ENCODE measurements at regions of chr5 and their contacts with region 1.

Region 1: DNA sequence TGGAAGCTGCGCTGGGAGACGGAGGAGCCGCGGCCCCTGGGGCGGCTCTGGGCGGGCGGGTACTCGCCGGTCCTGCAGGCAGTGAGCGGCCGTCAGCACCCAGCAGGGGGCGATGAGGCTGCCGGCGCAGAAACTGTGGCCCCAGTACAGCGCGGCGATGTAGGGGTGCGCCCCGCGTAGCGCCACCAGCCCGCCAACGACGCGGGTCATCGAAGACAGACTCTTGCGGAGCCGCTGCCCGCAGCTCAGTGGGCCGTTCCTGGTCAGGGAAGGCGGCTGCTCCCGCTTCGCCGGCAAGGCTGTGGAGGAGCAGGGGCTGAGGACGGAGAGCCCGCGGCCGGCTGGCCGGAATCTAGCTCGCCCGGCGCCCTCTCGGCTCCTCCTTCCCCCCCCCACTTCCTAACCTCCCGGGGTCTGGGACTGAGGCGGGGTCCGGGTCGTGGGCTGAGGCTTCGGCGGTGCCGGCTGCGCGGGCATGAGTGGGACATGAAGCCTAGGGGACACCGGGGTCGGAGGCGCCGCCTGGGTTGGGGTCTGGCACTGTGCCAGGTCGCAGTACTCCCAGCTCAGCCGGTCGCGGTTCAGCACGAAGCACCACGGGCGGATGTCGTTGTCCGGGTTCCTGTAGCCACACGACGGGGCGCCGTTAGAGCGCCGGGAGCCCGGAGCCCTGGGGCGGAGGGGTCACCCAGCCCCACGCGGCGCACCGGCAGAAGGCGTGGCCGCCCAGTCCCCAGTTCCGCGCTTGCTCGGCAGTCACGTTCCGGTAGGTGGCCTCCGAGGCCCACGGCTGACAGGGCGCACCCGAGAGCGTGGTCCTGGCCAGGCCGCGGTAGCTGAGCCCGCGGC is 3.6 kb upstream of the PFN3 start:
- DNase-seq: peak; percentile 96
- CTCF ChIP-seq: peak; percentile 98

Region 2: DNA sequence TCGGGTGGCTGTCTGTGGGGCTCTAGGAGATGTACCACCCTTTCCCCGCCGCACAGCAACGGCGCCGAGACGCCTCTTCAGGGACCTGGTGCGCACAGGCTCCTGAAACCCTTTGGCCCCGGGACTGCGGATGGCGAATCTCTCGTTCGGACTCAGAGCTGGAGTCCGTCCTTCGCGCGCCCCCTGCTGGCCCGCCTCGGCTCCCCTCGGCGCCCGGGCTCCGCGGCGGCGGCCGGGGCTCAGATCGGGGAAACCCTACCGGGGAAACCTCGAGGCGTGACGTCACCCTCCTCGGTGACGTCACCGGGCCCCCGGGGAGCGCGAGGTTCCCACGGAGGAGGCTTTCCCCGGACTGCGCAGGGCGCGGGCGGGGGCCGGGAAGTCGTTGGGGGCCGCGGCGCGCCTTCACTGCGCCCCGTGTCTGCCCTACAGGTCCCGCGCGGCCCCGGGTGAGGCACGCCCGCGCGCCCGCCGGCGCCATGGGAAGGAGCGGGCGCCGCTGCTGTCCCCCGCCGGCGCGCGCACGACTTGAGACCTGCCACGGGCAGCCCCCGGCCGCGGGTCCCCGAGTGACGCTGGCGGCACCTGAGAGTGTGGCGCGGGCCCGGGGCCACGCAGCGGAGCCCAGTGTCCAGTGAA is 50.5 kb after region 1 on chr5:
- in situ Hi-C with region 1: loop called (anchors 10 kb)
- DNase-seq: peak; percentile 97
- CTCF ChIP-seq: peak; percentile 98

Measured in GM13976 (cell line).